ENCODE measurements at regions of chr6 and their contacts with region 1.

Region 1: GRCh38 chr6:3742426-3743344 is 8.8 kb downstream of the PXDC1 start:
- DNase-seq: peak; percentile 71 to 97 (median 90)
- ATAC-seq: peak; percentile 95
- H3K4me3 ChIP-seq: peak overlapping the region; percentile 27
- H3K4me3 Mint-ChIP-seq: no peak overlapping the region
- H3K27ac ChIP-seq: no peak overlapping the region
- H3K27ac Mint-ChIP-seq: peak overlapping the region; percentile 2
- H3K4me1 ChIP-seq: peaks cover 11% of the 10 kb centered on the region
- H3K4me1 Mint-ChIP-seq: peaks cover 8% of the 10 kb centered on the region
- H3K27me3 ChIP-seq: peaks cover 0 to 9% of the 10 kb centered on the region in 2 experiments
- H3K27me3 Mint-ChIP-seq: peaks cover 19% of the 10 kb centered on the region
- CTCF ChIP-seq: peak; percentile 94

Region 2: DNA sequence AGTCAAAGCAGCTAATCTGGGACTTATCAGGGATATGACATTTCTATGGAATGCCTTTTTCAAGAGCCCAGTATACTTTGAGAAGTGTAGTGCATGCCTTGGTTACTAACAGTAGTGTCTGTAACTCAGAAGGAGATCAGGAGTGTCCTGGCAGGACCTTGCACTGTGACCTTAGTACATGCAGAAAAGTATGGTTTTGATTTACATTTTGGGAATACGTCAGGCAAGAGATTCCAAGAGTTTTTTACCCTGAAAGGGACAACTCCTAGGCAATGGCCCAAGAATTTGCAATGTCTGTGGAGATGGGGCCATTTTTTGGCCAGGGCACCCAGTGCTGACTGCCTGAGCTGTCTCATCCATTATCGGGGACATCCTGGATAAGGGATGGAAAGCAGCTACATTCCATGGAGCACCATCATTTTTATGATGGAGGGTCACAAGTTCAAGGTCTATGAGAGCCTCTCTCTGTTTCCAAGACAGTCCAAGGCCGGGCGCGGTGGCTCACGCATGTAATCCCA is 186.7 kb after region 1 on chr6:
- CTCF ChIA-PET with region 1: no interaction called
- POLR2A ChIA-PET with region 1: no interaction called
- intact Hi-C with region 1: loop called (anchors 1 kb)
- DNase-seq: no peak
- ATAC-seq: no peak
- H3K4me3 ChIP-seq: no peak overlapping the region
- H3K4me3 Mint-ChIP-seq: no peak overlapping the region
- H3K27ac ChIP-seq: no peak overlapping the region
- H3K27ac Mint-ChIP-seq: no peak overlapping the region
- H3K4me1 ChIP-seq: peaks cover 4% of the 10 kb centered on the region
- H3K4me1 Mint-ChIP-seq: no peaks in the 10 kb centered on the region
- H3K27me3 ChIP-seq: no peaks in the 10 kb centered on the region
- H3K27me3 Mint-ChIP-seq: peaks cover 5% of the 10 kb centered on the region
- CTCF ChIP-seq: no peak

Region 3: DNA sequence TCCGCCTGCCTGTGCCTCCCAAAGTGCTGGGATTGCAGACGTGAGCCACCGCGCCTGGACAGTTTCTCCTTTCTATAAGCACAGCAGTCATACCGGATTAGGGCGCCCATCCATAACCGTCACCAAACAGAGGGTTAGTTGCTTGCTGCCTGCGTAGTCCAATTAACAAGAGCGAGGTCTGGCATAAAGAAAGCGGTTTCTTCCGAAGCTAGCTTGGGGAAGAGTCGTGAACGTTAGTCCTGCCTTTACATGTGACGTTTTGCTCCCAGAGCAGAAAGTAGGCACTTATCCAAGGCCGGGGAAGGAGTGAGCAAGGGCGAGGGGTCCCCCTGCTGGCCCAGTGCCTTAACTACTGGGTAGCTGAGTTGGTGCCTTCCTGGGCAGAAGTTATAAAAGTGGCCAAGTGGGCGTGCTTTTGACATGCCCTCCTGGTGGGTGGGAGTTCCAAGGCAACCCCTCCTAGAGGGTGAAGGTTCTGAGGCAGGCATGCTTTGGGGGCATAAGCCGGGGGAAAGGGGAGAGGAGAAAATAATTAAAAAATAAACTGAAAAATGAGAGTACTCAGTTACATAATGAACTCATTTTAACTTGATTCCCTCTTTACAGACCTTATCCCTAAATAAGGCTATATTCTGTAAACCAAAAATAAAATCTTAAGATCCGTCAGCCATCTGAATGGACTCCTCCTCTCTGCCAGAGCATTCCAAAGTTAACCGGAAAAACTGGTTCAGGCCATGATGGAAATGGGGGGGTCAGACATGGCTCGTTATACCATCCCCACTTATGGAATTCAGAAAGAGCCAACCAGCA is 248.2 kb after region 1 on chr6:
- CTCF ChIA-PET with region 1: interaction called, 3 read pairs
- POLR2A ChIA-PET with region 1: interaction called, 4 read pairs
- intact Hi-C with region 1: loop called (anchors 1 to 5 kb)
- DNase-seq: peak; percentile 55 to 82 (median 62)
- ATAC-seq: peak; percentile 93
- H3K4me3 ChIP-seq: no peak overlapping the region
- H3K4me3 Mint-ChIP-seq: no peak overlapping the region
- H3K27ac ChIP-seq: no peak overlapping the region
- H3K27ac Mint-ChIP-seq: no peak overlapping the region
- H3K4me1 ChIP-seq: peaks cover 7% of the 10 kb centered on the region
- H3K4me1 Mint-ChIP-seq: peaks cover 24% of the 10 kb centered on the region
- H3K27me3 ChIP-seq: no peaks in the 10 kb centered on the region
- H3K27me3 Mint-ChIP-seq: no peaks in the 10 kb centered on the region
- CTCF ChIP-seq: peak; percentile 83

Region 4: DNA sequence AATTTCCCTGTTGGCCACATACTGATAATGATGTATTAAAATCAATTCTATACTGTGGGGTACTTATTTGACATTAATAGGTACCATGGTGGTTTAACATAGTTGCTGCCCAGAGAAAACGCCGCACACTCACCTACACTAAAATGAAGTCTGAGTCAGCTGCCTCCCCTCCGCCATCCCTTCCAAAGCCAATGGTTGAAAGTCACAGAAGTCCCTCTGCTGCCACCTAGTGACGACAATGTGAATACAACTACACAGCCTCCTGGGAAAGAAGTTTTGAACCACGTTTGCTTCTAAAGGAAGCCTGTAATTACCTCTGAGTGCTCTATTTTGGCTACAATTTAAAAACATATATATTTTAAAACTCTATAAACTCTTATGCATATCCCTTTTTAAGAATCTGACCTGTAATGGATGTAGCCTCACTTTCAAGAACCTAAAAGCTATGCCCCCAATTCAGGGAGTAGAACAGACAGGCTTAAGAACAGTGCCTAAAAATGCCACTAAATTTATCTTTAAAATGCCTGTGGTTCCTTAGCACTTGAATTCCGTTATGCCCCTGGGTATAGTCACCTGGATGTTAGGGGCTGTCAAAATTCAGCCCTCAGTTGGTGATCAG is 413.3 kb after region 1 on chr6:
- CTCF ChIA-PET with region 1: interaction called, 5 read pairs
- POLR2A ChIA-PET with region 1: no interaction called
- intact Hi-C with region 1: loop called (anchors 1 kb)
- DNase-seq: peak; percentile 57 to 91 (median 72)
- ATAC-seq: peak; percentile 99
- H3K4me3 ChIP-seq: no peak overlapping the region
- H3K4me3 Mint-ChIP-seq: no peak overlapping the region
- H3K27ac ChIP-seq: no peak overlapping the region
- H3K27ac Mint-ChIP-seq: no peak overlapping the region
- H3K4me1 ChIP-seq: no peaks in the 10 kb centered on the region
- H3K4me1 Mint-ChIP-seq: peaks cover 5% of the 10 kb centered on the region
- H3K27me3 ChIP-seq: no peaks in the 10 kb centered on the region
- H3K27me3 Mint-ChIP-seq: peaks cover 15% of the 10 kb centered on the region
- CTCF ChIP-seq: peak; percentile 86

Region 5: GRCh38 chr6:4936681-4937041 is 1194.0 kb after region 1 on chr6:
- CTCF ChIA-PET with region 1: no interaction called
- POLR2A ChIA-PET with region 1: no interaction called
- intact Hi-C with region 1: loop called in 1 of 2 experiments (anchors 5 kb)
- DNase-seq: peak in 3 of 14 experiments; percentile 25 to 45 (median 41)
- ATAC-seq: no peak
- H3K4me3 ChIP-seq: no peak overlapping the region
- H3K4me3 Mint-ChIP-seq: no peak overlapping the region
- H3K27ac ChIP-seq: no peak overlapping the region
- H3K27ac Mint-ChIP-seq: no peak overlapping the region
- H3K4me1 ChIP-seq: peaks cover 7% of the 10 kb centered on the region
- H3K4me1 Mint-ChIP-seq: peaks cover 55% of the 10 kb centered on the region
- H3K27me3 ChIP-seq: no peaks in the 10 kb centered on the region
- H3K27me3 Mint-ChIP-seq: no peaks in the 10 kb centered on the region
- CTCF ChIP-seq: peak; percentile 59

Measured in CD4-positive, alpha-beta T cell (primary cell).